Head of caudate nucleus (tissue), 42 donors: ENCODE measurements at regions of chr12 and their contacts with region 1.

Region 1: DNA sequence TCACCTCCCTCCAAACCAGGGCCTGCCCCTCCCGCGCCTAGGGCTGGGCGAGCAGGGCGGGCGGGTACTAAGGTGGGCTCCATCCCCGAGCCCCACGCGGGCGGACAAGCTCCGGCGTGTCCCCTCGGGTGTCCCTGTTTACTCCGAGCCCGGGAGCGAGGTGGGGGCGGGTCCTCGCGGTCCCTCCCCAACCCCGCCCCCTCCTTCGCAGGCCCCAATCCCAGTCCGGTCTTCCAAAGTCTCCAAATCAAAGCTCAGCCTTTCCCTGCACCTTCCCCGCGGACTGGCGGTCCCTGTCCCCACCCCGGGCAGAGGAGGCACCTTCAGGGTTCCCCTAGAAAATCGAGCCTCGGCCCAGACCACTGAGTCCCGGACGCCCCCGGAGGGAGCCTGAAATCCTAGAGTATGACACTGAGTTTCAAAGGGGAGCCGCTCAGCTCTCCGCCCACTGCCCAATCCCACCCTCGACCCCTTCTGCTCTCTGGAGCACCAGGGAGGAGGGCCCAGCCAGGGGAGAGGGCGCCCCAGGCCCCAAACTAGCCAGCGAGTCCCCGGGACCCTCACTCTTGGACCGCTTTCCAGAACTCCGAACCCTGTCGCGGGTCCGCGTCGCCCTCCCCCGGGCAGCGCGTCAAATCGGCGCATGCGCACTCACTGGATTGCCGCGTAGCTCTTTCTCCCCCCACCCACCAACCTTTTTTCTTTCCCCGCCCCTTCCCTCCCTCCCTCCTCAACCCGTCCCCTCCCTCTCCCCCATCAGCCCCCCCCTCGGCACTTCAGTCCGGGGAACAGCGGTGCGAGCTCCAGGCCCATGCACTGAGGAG is at the start of gene LRP1:
- DNase-seq: peak; percentile 55 to 94 (median 85)

Region 2: DNA sequence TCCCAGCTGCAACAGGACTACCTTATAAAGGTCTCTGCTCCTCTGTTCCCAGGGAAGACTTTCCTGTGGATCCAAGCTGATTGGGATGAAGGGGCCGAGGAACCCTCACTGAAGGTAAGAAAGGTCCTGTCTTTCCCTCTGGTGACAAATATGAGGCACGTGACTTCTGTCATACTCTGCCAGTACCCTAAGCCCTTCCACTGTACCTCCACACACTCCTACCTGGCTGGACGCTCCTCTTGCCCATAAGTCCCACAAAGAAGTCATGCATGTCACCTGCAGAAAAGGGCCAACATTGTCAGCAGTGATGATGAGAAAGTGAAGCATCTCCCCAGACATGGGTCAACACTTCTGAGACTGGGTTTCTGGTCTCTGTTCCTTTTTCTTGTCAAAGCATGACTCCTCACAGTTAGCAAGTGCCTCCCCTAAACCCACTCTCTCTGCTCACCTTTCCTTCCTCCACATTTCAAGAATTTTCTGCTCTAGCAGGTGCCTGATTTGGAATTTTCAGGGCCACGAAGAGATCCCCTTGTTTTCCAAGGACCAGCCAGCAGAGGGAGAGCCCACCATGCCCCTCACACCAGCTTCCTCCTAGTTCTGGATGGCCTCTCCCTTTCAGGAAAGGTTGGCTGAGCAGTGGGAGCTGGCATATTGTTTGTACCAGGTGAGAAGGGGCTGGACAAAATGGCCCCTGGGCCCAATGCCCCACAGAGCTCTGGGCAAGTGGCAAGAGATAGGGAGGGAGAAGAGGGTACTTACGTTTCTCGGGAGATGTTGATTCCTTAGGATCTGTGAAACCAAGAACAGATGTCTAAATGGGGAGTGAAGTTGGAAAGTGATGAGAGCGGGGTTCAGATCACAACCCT is 115.1 kb before region 1 on chr12:
- intact Hi-C with region 1: no loop called
- DNase-seq: no peak

Region 3: GRCh38 chr12:57173089-57173488 is 45.2 kb after region 1 on chr12:
- intact Hi-C with region 1: no loop called
- DNase-seq: peak in 5 of 42 donors; percentile 26 to 71 (median 46)

Region 4: GRCh38 chr12:57182921-57183790 is 55.2 kb after region 1 on chr12:
- intact Hi-C with region 1: loop called (anchors 5 kb)
- DNase-seq: peak; percentile 38 to 90 (median 76)

Region 5: GRCh38 chr12:57208631-57209282 is 80.8 kb after region 1 on chr12:
- intact Hi-C with region 1: no loop called
- DNase-seq: peak; percentile 51 to 95 (median 80)